ENCODE measurements at regions of chr17 and their contacts with region 1.

Region 1: GRCh38 chr17:49763735-49764558 is at the start of gene FAM117A:
- DNase-seq: peak; percentile 88
- ATAC-seq: peak; percentile 95
- H3K4me3 Mint-ChIP-seq: peak within 1 kb of the TSS; percentile 97
- H3K27ac Mint-ChIP-seq: peak within 1 kb of the TSS; percentile 95
- H3K4me1 Mint-ChIP-seq: peaks cover 36% of the 10 kb centered on the region
- H3K27me3 Mint-ChIP-seq: peaks cover 23% of the 10 kb centered on the region
- total RNA-seq, gene FAM117A: 47.0 to 57.2 TPM

Region 2: GRCh38 chr17:49707608-49708514 is 56.1 kb before region 1 on chr17 and contains the start of gene SLC35B1:
- POLR2A ChIA-PET with region 1: interaction called, 15 read pairs
- DNase-seq: peak; percentile 95
- ATAC-seq: peak; percentile 98
- H3K4me3 Mint-ChIP-seq: peak within 1 kb of the TSS; percentile 93
- H3K27ac Mint-ChIP-seq: peak within 1 kb of the TSS; percentile 98
- H3K4me1 Mint-ChIP-seq: peaks cover 36% of the 10 kb centered on the region
- H3K27me3 Mint-ChIP-seq: no peaks in the 10 kb centered on the region
- total RNA-seq, gene SLC35B1: 45.9 to 48.5 TPM

Region 3: GRCh38 chr17:49739641-49740271 is 24.2 kb before region 1 on chr17:
- POLR2A ChIA-PET with region 1: interaction called, 68 read pairs
- DNase-seq: peak; percentile 81
- ATAC-seq: peak; percentile 96
- H3K4me3 Mint-ChIP-seq: peak overlapping the region; percentile 92
- H3K27ac Mint-ChIP-seq: peak overlapping the region; percentile 99
- H3K4me1 Mint-ChIP-seq: peaks cover 55% of the 10 kb centered on the region
- H3K27me3 Mint-ChIP-seq: no peaks in the 10 kb centered on the region

Region 4: GRCh38 chr17:49748791-49749190 is 15.2 kb before region 1 on chr17:
- POLR2A ChIA-PET with region 1: interaction called, 76 read pairs
- DNase-seq: peak; percentile 32
- ATAC-seq: peak; percentile 69
- H3K4me3 Mint-ChIP-seq: peak overlapping the region; percentile 79
- H3K27ac Mint-ChIP-seq: peak overlapping the region; percentile 85
- H3K4me1 Mint-ChIP-seq: peaks cover 59% of the 10 kb centered on the region
- H3K27me3 Mint-ChIP-seq: no peaks in the 10 kb centered on the region

Region 5: DNA sequence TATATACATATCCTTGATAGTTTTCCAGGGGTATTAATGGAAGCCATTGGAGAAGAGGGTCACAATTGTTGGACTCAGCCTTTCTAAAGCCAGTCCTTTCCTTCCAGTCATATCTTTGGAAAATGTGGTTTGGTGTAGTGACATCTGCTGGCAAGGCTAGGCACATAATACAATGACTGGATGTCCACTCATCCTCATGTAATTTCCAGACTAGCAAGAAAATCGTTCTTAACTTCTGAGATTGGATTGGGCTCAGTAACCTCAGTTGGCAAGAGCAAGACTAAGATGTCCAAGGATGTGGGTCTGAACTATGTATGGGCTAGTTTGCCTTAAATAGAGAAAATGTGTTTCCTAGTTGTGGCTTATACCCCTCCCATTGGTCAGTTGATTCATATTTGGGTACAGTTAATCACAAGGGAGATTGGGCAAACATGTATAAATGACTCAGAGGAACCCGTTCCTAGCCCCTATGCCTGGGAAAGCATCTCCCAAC is 15.8 kb after region 1 on chr17:
- POLR2A ChIA-PET with region 1: interaction called, 10 read pairs
- DNase-seq: no peak
- ATAC-seq: peak; percentile 54
- H3K4me3 Mint-ChIP-seq: no peak overlapping the region
- H3K27ac Mint-ChIP-seq: no peak overlapping the region
- H3K4me1 Mint-ChIP-seq: peaks cover 8% of the 10 kb centered on the region
- H3K27me3 Mint-ChIP-seq: peaks cover 6% of the 10 kb centered on the region

Region 6: GRCh38 chr17:49788478-49789242 is 24.7 kb after region 1 on chr17 and contains the start of gene KAT7:
- POLR2A ChIA-PET with region 1: interaction called, 16 read pairs
- DNase-seq: peak; percentile 96
- ATAC-seq: peak; percentile 92
- H3K4me3 Mint-ChIP-seq: peak within 1 kb of the TSS; percentile 91
- H3K27ac Mint-ChIP-seq: peak within 1 kb of the TSS; percentile 97
- H3K4me1 Mint-ChIP-seq: peaks cover 38% of the 10 kb centered on the region
- H3K27me3 Mint-ChIP-seq: peaks cover 2% of the 10 kb centered on the region
- total RNA-seq, gene KAT7: 91.7 to 92.5 TPM

Region 7: DNA sequence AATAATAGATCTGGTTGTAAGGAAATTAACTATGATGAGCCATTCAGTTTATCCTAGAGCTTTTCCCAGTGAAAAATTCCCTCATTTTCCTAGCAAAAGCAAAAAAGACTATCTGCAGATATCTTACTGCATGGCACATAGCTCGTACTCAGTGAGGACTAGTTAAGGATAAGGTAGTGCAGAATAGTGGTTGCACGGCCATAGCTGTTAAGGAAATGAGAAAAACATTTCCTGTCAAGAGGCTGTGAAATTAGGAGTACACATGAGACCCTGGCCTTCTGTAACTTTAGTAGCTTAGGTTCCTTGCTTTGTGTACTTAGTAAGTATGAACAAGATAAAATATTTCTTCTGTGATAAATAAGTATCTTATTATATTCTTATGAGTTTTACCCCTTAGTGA is 34.8 kb after region 1 on chr17:
- POLR2A ChIA-PET with region 1: no interaction called
- DNase-seq: no peak
- ATAC-seq: peak; percentile 39
- H3K4me3 Mint-ChIP-seq: peak overlapping the region; percentile 10
- H3K27ac Mint-ChIP-seq: no peak overlapping the region
- H3K4me1 Mint-ChIP-seq: peaks cover 40% of the 10 kb centered on the region
- H3K27me3 Mint-ChIP-seq: no peaks in the 10 kb centered on the region

Measured in activated naive CD8-positive, alpha-beta T cell treated with anti-CD3 and anti-CD28 coated beads, Interleukin-2, amount 10 ng/mL, durations not matched to agents 7 days and 5 days (primary cell).